Gastrocnemius medialis (tissue), 4 donors: ENCODE measurements at regions of chr4 and their contacts with region 1.

Region 1: GRCh38 chr4:15729910-15730533 is 27.2 kb downstream of the BST1 start:
- DNase-seq: no peak
- ATAC-seq: peak; percentile 75 to 87
- H3K4me3 ChIP-seq: no peak overlapping the region
- H3K27ac ChIP-seq: no peak overlapping the region
- H3K4me1 ChIP-seq: no peaks in the 10 kb centered on the region
- H3K27me3 ChIP-seq: no peaks in the 10 kb centered on the region
- CTCF ChIP-seq: peak; percentile 58 to 88 (median 71)
- POLR2A ChIP-seq: no peak

Region 2: DNA sequence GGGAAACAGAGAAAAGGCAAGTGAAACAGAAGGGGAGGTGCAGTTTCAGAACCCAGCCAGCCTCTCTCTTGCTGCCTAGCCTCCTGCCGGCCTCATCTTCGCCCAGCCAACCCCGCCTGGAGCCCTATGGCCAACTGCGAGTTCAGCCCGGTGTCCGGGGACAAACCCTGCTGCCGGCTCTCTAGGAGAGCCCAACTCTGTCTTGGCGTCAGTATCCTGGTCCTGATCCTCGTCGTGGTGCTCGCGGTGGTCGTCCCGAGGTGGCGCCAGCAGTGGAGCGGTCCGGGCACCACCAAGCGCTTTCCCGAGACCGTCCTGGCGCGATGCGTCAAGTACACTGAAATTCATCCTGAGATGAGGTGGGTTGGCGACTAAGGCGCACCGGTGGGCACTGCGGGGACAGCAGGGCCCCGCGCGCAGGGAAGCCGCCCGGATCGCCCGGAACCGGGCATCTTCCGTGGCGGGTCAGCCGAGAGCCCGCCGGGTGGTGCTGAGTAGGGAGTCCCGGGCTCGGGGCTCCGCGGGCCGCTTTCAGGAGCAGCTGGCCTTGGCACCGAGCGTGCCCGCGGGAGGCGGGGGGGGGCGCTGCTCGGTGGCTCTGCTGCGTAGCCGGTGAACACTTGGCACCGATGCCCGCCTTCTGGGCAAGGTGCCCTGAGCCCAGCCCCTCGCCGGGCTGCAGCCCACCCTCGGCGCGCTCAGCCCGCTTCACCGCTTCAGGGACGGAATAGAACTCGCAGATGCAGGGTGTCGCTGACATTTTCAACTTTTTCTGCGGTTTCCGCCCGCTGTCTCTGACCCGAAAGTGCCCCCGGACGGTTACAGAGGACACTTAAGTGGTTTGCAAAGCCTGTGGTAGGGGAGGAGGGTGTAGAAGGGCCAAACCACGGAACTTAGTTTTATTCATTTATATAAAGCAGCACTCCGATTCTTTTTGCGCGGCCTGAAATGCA is 48.5 kb after region 1 on chr4 and contains the start of gene CD38:
- in situ Hi-C with region 1: no loop called
- intact Hi-C with region 1: loop called (anchors 2 kb)
- DNase-seq: peak; percentile 46 to 64
- ATAC-seq: peak; percentile 76 to 86
- H3K4me3 ChIP-seq: peak within 1 kb of the TSS; percentile 71 to 86 (median 78)
- H3K27ac ChIP-seq: peak within 1 kb of the TSS; percentile 89 to 91 (median 90)
- H3K4me1 ChIP-seq: peaks cover 6 to 27% of the 10 kb centered on the region in 2 donors
- H3K27me3 ChIP-seq: no peaks in the 10 kb centered on the region
- CTCF ChIP-seq: no peak
- POLR2A ChIP-seq: peak in 1 of 2 donors; percentile 6
- total RNA-seq, gene CD38: 0.73 to 9.0 (median 2.4) TPM

Region 3: DNA sequence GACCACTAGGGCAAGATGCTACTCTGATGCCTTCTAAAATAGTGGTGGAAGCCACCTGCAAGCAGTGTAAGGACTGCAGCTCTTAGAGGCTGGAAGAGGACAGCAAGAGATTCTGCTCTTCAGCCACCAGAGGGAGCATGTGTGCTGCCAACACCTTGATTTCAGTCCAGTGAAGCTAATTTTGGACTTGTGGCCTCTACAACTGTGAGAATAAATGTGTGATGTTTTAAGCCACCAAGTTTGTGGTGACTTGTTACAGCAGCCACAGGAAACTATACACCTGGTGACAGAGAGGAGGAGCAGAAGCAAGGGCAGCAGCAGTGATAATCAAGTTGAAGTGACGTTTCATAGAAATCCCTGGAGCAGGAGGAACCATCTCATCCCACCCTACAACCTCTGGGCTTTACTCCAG is 152.7 kb after region 1 on chr4:
- in situ Hi-C with region 1: no loop called
- intact Hi-C with region 1: loop called (anchors 10 kb)
- DNase-seq: peak; percentile 9 to 35
- ATAC-seq: peak; percentile 87 to 97
- H3K4me3 ChIP-seq: no peak overlapping the region
- H3K27ac ChIP-seq: no peak overlapping the region
- H3K4me1 ChIP-seq: no peaks in the 10 kb centered on the region
- H3K27me3 ChIP-seq: no peaks in the 10 kb centered on the region
- CTCF ChIP-seq: peak; percentile 72 to 84 (median 77)
- POLR2A ChIP-seq: no peak

Region 4: DNA sequence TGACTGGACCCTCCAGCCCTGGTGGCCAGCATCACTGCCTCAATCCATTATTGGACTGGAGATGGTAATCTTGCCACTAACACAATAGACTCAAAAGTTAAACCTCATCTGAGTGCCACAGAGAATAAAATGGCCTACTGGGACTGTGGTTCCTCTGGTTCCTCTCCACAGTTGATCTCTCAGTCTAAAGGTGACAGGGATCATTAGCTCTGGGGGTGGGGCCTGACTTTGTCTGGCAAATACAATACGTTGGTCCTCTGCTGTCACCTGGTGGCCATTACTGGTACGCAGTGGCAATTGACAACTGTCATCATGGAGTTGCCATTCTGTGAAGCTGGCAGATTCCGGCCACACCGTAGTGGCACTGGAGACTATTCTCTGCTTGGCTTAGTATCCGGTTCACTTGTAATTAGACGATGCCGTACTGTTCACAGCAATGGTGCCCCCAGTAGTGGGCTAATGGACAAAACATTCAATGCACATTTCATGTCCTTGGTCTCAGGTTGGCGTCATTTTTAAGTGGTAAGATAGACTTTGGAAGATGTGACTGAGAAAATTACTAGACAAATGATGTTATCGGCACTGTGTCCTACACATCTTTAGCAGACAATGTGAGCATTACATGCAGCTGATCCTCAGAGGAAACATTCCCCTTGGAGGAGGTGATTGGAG is 226.3 kb after region 1 on chr4:
- in situ Hi-C with region 1: loop called in 1 of 4 experiments (anchors 25 kb)
- intact Hi-C with region 1: loop called (anchors 2 kb)
- DNase-seq: peak; percentile 59 to 75
- ATAC-seq: peak; percentile 91 to 96
- H3K4me3 ChIP-seq: no peak overlapping the region
- H3K27ac ChIP-seq: no peak overlapping the region
- H3K4me1 ChIP-seq: peaks cover 0 to 3% of the 10 kb centered on the region in 2 donors
- H3K27me3 ChIP-seq: no peaks in the 10 kb centered on the region
- CTCF ChIP-seq: peak; percentile 80 to 95 (median 87)
- POLR2A ChIP-seq: no peak

Region 5: DNA sequence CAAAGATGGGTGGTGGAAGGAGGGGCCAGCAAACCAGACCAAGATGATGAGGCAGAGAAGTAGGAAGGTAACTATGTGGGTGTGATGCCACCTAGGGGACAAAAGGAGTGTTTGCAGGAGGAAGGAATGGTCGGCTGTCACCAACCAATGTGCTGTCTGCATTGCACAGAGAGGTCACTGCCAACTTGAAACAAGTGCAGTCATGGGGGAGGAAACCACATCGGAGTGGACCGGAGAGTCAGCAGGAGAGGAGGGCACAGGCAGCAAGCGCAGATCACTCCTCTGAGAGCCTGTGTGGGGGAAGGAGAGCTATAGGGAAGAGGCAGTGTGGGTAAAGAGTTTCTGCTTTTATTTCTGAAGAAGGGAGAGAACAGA is 271.4 kb after region 1 on chr4:
- in situ Hi-C with region 1: loop called in 3 of 4 experiments (anchors 10 kb)
- intact Hi-C with region 1: loop called (anchors 1 kb)
- DNase-seq: peak; percentile 20 to 56
- ATAC-seq: peak; percentile 89 to 98
- H3K4me3 ChIP-seq: no peak overlapping the region
- H3K27ac ChIP-seq: no peak overlapping the region
- H3K4me1 ChIP-seq: no peaks in the 10 kb centered on the region
- H3K27me3 ChIP-seq: no peaks in the 10 kb centered on the region
- CTCF ChIP-seq: peak; percentile 53 to 81 (median 73)
- POLR2A ChIP-seq: no peak

Region 6: DNA sequence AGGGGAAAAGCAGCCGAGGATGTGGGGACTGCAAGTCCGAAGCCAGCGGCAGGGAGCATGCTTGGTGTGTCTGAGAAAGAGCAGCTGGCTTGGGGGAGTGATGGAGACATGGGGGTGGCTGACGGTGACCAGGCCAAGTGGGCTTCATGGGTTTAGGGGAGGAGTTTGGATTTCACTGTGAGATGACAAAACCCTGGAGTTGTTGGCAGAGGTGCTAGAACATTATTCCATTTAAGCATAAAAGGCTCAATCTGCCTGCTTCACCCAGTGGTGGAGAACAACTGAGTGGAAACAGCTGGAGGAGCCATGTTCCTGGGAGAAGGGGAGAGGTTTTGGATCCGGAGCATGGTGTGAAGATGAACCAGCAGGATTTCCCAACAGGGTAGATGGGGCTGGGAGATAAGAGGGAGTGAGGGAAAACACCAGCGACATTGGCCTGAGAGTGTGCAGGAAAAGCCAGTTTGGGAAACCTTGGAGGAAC is 814.3 kb after region 1 on chr4:
- in situ Hi-C with region 1: no loop called
- intact Hi-C with region 1: no loop called
- DNase-seq: no peak
- ATAC-seq: no peak
- H3K4me3 ChIP-seq: no peak overlapping the region
- H3K27ac ChIP-seq: no peak overlapping the region
- H3K4me1 ChIP-seq: no peaks in the 10 kb centered on the region
- H3K27me3 ChIP-seq: no peaks in the 10 kb centered on the region
- CTCF ChIP-seq: no peak
- POLR2A ChIP-seq: no peak

Region 7: GRCh38 chr4:16988814-16989213 is 1258.8 kb after region 1 on chr4:
- in situ Hi-C with region 1: no loop called
- intact Hi-C with region 1: no loop called
- DNase-seq: no peak
- ATAC-seq: no peak
- H3K4me3 ChIP-seq: no peak overlapping the region
- H3K27ac ChIP-seq: no peak overlapping the region
- H3K4me1 ChIP-seq: no peaks in the 10 kb centered on the region
- H3K27me3 ChIP-seq: no peaks in the 10 kb centered on the region
- CTCF ChIP-seq: no peak
- POLR2A ChIP-seq: no peak